Colonic mucosa (tissue), 4 donors: ENCODE measurements at regions of chr3 and their contacts with region 1.

Region 1: DNA sequence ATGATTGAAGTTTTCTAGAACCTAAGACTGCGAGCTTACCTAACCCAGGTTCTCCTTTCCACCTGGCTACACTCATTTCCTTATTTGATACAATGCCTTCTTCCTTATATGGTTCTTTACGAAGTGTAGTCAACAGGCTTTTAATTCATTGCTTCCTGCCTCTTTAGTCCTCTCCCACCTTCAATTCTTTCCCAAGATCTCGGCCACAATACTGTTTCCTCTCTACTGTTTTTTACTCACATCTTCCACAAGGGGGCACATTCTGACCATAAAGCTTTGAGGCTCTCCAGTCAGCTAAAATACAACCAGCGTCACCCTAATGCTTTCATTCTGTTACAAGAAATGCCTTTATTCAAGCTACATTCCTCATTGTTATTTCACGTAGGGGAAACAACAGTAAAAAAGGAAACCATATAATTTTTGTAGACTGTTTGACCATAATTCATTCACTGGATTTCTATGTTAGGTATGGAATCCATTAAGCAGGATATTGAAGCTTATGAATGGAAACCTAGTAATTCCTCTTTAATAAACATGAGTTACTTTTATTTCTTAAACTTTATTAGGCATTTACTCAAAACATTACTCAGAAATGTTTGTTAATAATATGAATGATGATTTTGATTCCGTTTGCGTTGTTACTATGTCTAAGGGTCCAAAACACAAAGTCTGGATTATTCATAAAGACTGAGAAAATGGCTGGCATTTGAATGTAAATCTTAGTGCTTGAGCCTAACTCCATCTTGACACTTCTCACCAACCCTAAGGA is 29.5 kb upstream of the VEPH1 start:
- DNase-seq: peak; percentile 38
- H3K4me3 ChIP-seq: no peak overlapping the region
- H3K27ac ChIP-seq: no peak overlapping the region
- H3K4me1 ChIP-seq: no peaks in the 10 kb centered on the region
- H3K27me3 ChIP-seq: no peaks in the 10 kb centered on the region
- CTCF ChIP-seq: peak; percentile 58

Region 2: GRCh38 chr3:157572559-157573270 is 40.0 kb after region 1 on chr3:
- intact Hi-C with region 1: loop called (anchors 2 kb)
- DNase-seq: peak; percentile 36
- H3K4me3 ChIP-seq: no peak overlapping the region
- H3K27ac ChIP-seq: no peak overlapping the region
- H3K4me1 ChIP-seq: no peaks in the 10 kb centered on the region
- H3K27me3 ChIP-seq: no peaks in the 10 kb centered on the region
- CTCF ChIP-seq: peak; percentile 75